Natural killer cell (primary cell): ENCODE measurements at regions of chr19 and their contacts with region 1.

Region 1: GRCh38 chr19:41597600-41598041 is 21.7 kb downstream of the CEACAM21 start:
- DNase-seq: peak; percentile 54 to 88
- ATAC-seq: peak; percentile 87 to 91 (median 87)
- H3K4me3 ChIP-seq: no peak overlapping the region
- H3K4me3 Mint-ChIP-seq: peak overlapping the region; percentile 19
- H3K27ac ChIP-seq: no peak overlapping the region
- H3K27ac Mint-ChIP-seq: peak overlapping the region in 1 of 2 donors; percentile 54
- H3K4me1 ChIP-seq: peaks cover 3% of the 10 kb centered on the region
- H3K4me1 Mint-ChIP-seq: peaks cover 6 to 12% of the 10 kb centered on the region in 2 donors
- H3K27me3 ChIP-seq: peaks cover 11% of the 10 kb centered on the region
- H3K27me3 Mint-ChIP-seq: peaks cover 31% of the 10 kb centered on the region in 2 donors
- CTCF ChIP-seq: peak; percentile 91

Region 2: DNA sequence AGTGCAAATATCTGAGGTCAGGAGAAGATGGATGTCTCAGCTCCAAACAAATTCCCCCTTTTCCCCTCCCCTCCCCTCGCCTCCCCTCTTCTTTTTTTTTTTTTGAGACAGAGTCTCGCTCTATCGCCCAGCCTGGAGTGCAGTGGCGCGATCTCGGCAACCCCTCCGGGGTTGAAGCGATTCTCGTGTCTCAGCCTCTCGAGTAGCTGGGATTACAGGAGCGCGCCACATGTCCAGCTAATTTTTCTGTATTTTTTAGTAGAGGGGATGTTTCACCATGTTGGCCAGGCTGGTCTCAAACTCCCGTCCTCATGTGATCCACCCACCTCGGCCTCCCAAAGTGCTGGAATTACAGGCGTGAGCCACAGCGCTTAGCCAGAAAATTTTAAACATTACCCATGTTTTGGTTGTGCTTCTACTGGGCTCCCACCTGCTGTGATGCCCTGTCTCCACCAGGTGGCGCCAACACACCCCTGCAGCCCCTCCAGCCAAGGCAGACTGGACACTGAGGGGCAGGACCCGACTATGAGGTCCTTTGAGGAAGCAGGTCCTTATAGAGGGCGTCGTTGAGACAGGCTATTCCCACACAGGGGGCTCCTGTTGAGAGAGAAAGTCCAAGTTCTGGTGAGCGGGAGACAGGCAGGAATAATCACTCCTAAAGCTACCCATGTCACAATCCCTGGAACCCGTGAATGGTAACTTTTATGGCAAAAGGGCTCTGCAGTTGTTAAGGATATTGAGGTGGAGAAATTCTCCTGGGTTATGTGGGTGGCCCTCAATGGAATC is 148.3 kb before region 1 on chr19:
- intact Hi-C with region 1: loop called (anchors 1 kb)
- DNase-seq: peak; percentile 71 to 85
- ATAC-seq: peak; percentile 87 to 96 (median 94)
- H3K4me3 ChIP-seq: no peak overlapping the region
- H3K4me3 Mint-ChIP-seq: peak overlapping the region; percentile 45
- H3K27ac ChIP-seq: no peak overlapping the region
- H3K27ac Mint-ChIP-seq: no peak overlapping the region
- H3K4me1 ChIP-seq: peaks cover 9% of the 10 kb centered on the region
- H3K4me1 Mint-ChIP-seq: peaks cover 0 to 8% of the 10 kb centered on the region in 2 donors
- H3K27me3 ChIP-seq: peaks cover 3% of the 10 kb centered on the region
- H3K27me3 Mint-ChIP-seq: peaks cover 14% of the 10 kb centered on the region in 2 donors
- CTCF ChIP-seq: peak; percentile 92